Panc1 (cell line): ENCODE measurements at regions of chr22 and their contacts with region 1.

Region 1: DNA sequence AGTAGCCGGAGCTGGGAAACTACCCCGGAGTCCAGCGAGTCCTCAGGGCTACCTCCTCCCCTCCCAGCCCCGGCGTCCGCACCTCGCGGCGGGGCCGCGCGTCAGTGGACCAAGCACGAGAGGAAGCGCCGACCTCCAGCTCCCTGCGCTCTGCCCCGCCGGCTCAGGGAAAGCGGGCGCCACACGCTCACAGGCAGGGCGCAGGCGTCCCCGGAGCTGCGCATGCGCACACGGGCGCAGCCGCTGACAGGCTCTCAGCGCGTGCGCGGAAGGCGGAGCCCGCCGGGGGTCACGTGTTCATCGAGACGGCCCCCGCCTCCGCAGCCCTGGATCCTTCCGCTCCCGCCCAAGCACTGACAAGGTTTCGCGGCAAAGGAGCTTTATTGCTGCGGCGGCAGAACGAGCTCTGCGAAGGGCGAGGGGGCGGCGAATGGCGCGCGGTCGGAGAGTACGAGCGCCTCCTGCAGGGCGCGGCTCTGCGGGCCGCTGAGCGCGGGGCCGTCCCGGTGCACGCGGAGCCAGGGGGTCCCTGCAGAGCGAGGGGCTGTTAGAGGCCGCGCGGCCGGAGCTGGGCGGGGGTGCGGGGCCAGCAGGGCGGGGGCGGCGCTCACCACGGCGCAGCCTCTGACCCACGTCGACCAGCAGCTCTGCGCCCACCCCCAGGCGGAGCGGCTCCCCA is at the start of gene SCO2:
- DNase-seq: no peak
- ATAC-seq: peak; percentile 56
- H3K4me3 ChIP-seq: peak within 1 kb of the TSS; percentile 65 to 69
- H3K27ac ChIP-seq: peak within 1 kb of the TSS; percentile 82
- H3K4me1 ChIP-seq: peaks cover 4% of the 10 kb centered on the region
- H3K27me3 ChIP-seq: no peaks in the 10 kb centered on the region
- CTCF ChIP-seq: no peak
- total RNA-seq, gene SCO2: 14.2 TPM

Region 2: GRCh38 chr22:50459016-50459415 is 66.5 kb before region 1 on chr22:
- CTCF ChIA-PET with region 1: no interaction called
- POLR2A ChIA-PET with region 1: interaction called, 10 read pairs
- in situ Hi-C with region 1: no loop called
- intact Hi-C with region 1: no loop called
- DNase-seq: no peak
- ATAC-seq: no peak
- H3K4me3 ChIP-seq: no peak overlapping the region
- H3K27ac ChIP-seq: no peak overlapping the region
- H3K4me1 ChIP-seq: no peaks in the 10 kb centered on the region
- H3K27me3 ChIP-seq: no peaks in the 10 kb centered on the region
- CTCF ChIP-seq: no peak

Region 3: DNA sequence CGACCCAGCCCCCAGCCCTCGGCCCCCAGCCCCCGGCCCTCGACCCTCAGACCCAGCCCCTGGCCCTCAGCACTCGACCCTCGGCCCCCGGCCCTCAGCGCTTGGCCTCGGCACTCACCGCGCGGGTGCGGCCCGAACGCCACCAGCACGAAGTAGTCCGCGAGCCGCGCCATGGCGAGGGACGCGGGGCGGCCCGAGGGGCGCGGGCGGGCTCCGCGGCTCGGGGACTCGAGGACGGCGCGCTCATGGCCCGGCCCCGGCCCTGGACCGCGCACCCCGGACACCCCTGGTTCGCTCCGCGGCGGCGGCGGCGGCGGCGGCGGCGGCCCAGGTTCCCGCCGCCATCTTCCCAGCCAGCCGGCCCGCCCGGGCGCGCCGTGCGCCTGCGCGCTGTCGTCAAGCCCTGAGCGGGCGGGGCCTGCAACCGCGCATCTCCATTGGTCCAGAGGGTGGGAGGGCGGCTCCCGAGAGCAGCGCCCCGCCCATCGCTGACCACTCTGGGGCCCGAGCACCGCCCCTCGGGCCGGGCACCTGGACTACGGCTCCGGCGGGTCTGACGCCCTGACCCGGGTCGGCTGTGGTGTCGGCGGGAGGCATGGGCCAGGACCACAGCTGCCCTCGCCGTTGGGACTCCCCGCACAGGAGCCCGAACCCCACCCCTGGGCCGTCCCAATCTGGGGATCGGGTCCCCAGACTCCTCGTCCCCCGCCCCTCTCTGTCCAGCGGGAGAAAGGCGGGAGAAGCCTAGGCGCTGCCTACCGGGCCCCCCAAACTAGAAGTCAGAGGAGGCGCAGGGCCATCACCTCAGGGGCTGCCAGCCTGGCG is 50.6 kb before region 1 on chr22 and contains the start of gene SBF1:
- CTCF ChIA-PET with region 1: no interaction called
- POLR2A ChIA-PET with region 1: no interaction called
- in situ Hi-C with region 1: no loop called
- intact Hi-C with region 1: no loop called
- DNase-seq: no peak
- ATAC-seq: peak; percentile 94
- H3K4me3 ChIP-seq: peak within 1 kb of the TSS; percentile 59 to 63
- H3K27ac ChIP-seq: peak within 1 kb of the TSS; percentile 63
- H3K4me1 ChIP-seq: peaks cover 15% of the 10 kb centered on the region
- H3K27me3 ChIP-seq: no peaks in the 10 kb centered on the region
- CTCF ChIP-seq: no peak
- total RNA-seq, gene SBF1: 59.2 TPM

Region 4: GRCh38 chr22:50507991-50508884 is 17.3 kb before region 1 on chr22 and contains the start of gene NCAPH2:
- CTCF ChIA-PET with region 1: interaction called, 10 read pairs
- POLR2A ChIA-PET with region 1: interaction called, 6 read pairs
- in situ Hi-C with region 1: no loop called
- intact Hi-C with region 1: no loop called
- DNase-seq: no peak
- ATAC-seq: peak; percentile 82
- H3K4me3 ChIP-seq: peak within 1 kb of the TSS; percentile 85 to 91
- H3K27ac ChIP-seq: peak within 1 kb of the TSS; percentile 87
- H3K4me1 ChIP-seq: peaks cover 5% of the 10 kb centered on the region
- H3K27me3 ChIP-seq: no peaks in the 10 kb centered on the region
- CTCF ChIP-seq: no peak
- total RNA-seq, gene NCAPH2: 55.6 TPM

Region 5: DNA sequence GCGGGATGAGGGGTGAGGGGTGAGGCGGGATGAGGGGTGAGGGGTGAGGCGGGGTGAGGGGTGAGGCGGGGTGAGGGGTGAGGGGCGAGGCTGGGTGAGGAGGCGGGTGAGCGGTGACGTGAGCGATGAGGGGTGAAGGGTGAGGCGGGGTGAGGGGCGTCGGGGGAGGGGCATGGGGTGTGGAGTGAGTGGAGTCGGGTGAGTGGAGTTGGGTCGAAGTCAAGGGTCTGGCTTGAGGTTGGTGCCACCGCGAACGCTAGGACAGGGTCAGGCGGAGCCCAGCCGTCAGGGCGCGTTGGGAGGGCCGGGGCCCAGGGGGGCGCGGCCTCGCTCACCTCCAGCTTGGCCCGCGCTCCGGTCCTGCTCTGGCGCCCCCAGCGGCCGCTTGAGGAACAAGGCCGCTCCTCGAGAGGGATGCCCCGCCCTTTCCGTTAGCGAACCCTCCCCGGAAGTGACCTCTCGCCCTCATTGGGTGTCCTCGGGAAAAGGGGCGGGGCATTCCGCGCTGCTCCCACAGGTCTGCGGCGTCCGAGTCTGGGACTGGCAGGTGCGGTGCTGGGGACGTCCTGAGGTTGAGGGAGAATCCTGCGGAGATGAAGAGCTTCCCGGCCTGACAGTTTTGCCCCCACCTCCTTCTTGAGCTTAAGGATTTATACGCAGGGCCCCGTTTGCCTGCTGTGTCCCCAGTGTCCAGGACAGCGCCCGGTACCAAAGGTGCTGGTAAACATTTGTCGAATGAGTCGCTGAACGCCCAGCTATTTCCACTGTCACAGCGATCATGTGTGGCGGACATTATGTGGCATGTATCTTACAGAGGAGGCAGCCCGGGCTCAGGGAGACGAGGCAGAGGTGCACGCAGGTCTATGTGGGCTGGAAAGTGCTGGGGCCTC is 37.2 kb after region 1 on chr22 and contains the start of gene SYCE3:
- CTCF ChIA-PET with region 1: interaction called, 3 read pairs
- POLR2A ChIA-PET with region 1: interaction called, 11 read pairs
- in situ Hi-C with region 1: no loop called
- intact Hi-C with region 1: no loop called
- DNase-seq: peak; percentile 66
- ATAC-seq: peak; percentile 98
- H3K4me3 ChIP-seq: peak within 1 kb of the TSS; percentile 67 to 82
- H3K27ac ChIP-seq: peak within 1 kb of the TSS; percentile 66; the same call in 1 of the 2 replicates
- H3K4me1 ChIP-seq: 0 out of 2 replicates have a peak, but pooled peaks cover 4% of the 10 kb centered on the region
- H3K27me3 ChIP-seq: no peaks in the 10 kb centered on the region
- CTCF ChIP-seq: peak; percentile 92
- total RNA-seq, gene SYCE3: not detected

Region 6: GRCh38 chr22:50595189-50595588 is 69.7 kb after region 1 on chr22:
- CTCF ChIA-PET with region 1: no interaction called
- POLR2A ChIA-PET with region 1: interaction called, 10 read pairs
- in situ Hi-C with region 1: no loop called
- intact Hi-C with region 1: no loop called
- DNase-seq: no peak
- ATAC-seq: no peak
- H3K4me3 ChIP-seq: no peak overlapping the region
- H3K27ac ChIP-seq: no peak overlapping the region
- H3K4me1 ChIP-seq: no peaks in the 10 kb centered on the region
- H3K27me3 ChIP-seq: no peaks in the 10 kb centered on the region
- CTCF ChIP-seq: no peak

Region 7: DNA sequence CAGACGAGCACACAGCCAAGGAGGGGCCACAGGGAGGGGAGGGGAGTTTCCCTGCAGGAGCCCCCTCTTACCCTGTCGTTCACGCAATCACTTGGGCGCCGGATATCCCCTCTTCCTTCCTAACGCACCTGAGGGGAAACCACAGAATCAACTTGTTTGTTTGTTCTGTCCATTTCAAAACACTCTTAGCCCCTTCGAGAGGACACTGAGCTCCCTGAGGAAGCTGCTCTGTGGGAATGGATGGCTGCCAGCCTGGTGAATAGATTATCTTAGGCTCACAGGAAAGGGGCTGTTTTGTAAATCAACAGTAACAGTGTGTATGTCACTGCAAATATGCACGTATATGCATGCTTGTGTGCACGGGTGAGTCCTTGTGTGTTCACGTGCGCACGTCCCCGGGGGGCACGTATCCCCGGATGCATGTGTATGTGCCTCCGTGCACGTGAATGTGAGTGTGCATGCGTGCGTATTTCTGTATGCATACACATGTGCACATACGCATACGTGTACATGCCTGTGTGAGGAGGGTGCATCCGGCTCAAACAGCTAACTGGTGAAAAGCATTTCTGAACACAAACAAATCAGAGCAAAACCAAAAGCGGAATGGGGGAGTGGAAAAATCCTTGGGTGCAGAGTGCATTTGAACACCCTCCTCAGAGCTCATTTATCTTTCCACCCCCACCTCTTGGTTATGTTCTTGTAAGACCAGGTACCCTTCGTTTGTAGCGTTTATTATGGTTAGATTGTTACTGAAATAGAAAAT is 95.2 kb after region 1 on chr22:
- CTCF ChIA-PET with region 1: interaction called, 12 read pairs
- POLR2A ChIA-PET with region 1: no interaction called
- in situ Hi-C with region 1: no loop called
- intact Hi-C with region 1: no loop called
- DNase-seq: no peak
- ATAC-seq: peak; percentile 79
- H3K4me3 ChIP-seq: peak overlapping the region; percentile 28 to 65
- H3K27ac ChIP-seq: no peak overlapping the region
- H3K4me1 ChIP-seq: peaks cover 7% of the 10 kb centered on the region
- H3K27me3 ChIP-seq: no peaks in the 10 kb centered on the region
- CTCF ChIP-seq: peak; percentile 67

Region 8: DNA sequence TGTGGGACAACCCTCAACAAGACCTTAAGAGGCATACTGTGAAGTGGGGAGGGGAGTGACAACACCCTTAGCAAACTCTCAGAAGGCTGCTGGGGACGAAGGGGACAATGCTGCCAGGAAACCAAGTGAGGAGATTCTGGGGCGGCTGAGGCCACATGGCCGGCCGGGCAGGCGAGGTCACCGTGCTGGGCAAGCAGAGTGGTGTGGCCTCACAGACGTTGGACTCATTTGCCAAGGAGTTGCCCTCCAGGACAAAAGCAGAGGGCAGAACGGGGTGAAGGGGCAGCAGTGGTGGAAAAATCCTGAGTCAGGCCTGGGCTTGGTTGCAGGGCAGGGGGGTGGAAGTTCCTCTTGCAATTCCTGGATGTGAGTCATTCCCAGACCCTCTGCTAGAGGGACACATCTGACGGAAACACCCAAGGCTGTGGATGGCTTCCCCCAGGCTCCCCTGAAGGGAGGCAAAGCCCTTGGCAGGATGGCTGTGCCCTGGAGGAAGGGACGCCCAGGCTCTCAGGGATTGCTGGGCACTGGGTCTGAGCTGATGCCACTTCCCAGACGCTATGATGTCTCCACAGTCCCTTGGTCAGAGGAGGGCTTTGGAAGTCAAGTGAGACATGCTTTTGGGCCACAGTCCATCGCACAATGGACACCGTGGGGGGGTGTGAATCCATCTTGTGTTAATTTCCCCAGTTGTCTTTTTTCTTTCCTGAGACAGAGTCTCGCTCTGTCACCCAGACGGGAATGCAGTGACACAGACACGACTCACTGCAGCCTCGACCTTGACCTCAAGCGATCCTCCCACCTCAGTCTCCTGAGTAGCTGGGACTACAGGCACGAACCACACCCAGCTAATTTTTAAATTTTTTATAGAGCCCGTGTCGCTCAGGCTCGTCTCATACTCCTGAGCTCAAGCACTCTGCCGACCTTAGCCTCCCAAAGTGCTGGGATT is 130.9 kb after region 1 on chr22:
- CTCF ChIA-PET with region 1: no interaction called
- POLR2A ChIA-PET with region 1: no interaction called
- in situ Hi-C with region 1: no loop called
- intact Hi-C with region 1: no loop called
- DNase-seq: no peak
- ATAC-seq: peak; percentile 82
- H3K4me3 ChIP-seq: no peak overlapping the region
- H3K27ac ChIP-seq: no peak overlapping the region
- H3K4me1 ChIP-seq: no peaks in the 10 kb centered on the region
- H3K27me3 ChIP-seq: no peaks in the 10 kb centered on the region
- CTCF ChIP-seq: no peak